ENCODE measurements at regions of chr19 and their contacts with region 1.

Region 1: GRCh38 chr19:13150187-13150930 is at the starts of genes IER2 and STX10:
- DNase-seq: peak; percentile 96 to 98
- ATAC-seq: peak; percentile 74 to 80 (median 75)
- H3K4me3 ChIP-seq: peak within 1 kb of the TSS; percentile 93
- H3K27ac ChIP-seq: peak within 1 kb of the TSS; percentile 96
- H3K4me1 ChIP-seq: peaks cover 22% of the 10 kb centered on the region
- H3K27me3 ChIP-seq: no peaks in the 10 kb centered on the region
- CTCF ChIP-seq: peak; percentile 54
- total RNA-seq, gene IER2: 16.8 to 31.2 (median 29.9) TPM
- total RNA-seq, gene STX10: 18.5 to 20.4 (median 19.3) TPM

Region 2: GRCh38 chr19:13117772-13118423 is 32.5 kb before region 1 on chr19 and contains the start of gene NACC1:
- intact Hi-C with region 1: loop called (anchors 1 to 2 kb)
- DNase-seq: peak; percentile 93 to 95
- ATAC-seq: peak; percentile 91 to 92 (median 92)
- H3K4me3 ChIP-seq: peak within 1 kb of the TSS; percentile 92
- H3K27ac ChIP-seq: peak within 1 kb of the TSS; percentile 79
- H3K4me1 ChIP-seq: peaks cover 37% of the 10 kb centered on the region
- H3K27me3 ChIP-seq: no peaks in the 10 kb centered on the region
- CTCF ChIP-seq: no peak
- total RNA-seq, gene NACC1: 32.1 to 48.9 (median 37.9) TPM

Region 3: GRCh38 chr19:13579388-13580060 is 429.2 kb after region 1 on chr19:
- intact Hi-C with region 1: no loop called
- DNase-seq: no peak
- ATAC-seq: no peak
- H3K4me3 ChIP-seq: no peak overlapping the region
- H3K27ac ChIP-seq: no peak overlapping the region
- H3K4me1 ChIP-seq: no peaks in the 10 kb centered on the region
- H3K27me3 ChIP-seq: no peaks in the 10 kb centered on the region
- CTCF ChIP-seq: no peak

Region 4: GRCh38 chr19:13842401-13843103 is 692.2 kb after region 1 on chr19:
- intact Hi-C with region 1: loop called in 1 of 2 experiments (anchors 5 kb)
- DNase-seq: peak; percentile 91 to 93
- ATAC-seq: peak; percentile 12 to 19 (median 12)
- H3K4me3 ChIP-seq: peak overlapping the region; percentile 99
- H3K27ac ChIP-seq: peak overlapping the region; percentile 100
- H3K4me1 ChIP-seq: peaks cover 33% of the 10 kb centered on the region
- H3K27me3 ChIP-seq: no peaks in the 10 kb centered on the region
- CTCF ChIP-seq: no peak

Region 5: DNA sequence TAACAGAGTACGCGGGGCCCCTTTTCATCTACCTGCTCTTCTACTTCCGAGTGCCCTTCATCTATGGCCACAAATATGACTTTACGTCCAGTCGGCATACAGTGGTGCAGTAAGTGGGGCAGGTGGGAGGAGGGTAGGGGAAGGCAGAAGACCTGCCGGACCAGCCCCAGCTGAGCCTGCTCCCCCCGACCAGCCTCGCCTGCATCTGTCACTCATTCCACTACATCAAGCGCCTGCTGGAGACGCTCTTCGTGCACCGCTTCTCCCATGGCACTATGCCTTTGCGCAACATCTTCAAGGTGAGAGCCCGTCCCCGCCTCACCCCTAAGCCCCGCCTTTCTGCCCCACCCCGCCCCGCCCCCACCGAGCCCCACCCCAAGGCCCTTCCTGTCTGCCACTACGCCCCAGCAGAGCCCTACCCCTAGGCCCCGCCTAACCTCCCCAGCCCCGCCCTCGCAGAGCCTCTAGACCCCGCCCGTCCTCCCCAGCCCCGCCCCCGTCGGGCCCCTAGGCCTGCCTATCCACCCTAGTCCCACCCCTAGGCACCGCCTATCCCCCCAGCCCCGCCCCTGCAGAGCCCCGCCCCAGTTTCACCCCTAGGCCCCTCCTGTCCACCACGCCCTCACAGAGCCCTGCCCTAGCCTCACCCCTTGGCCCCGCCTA is 1413.8 kb after region 1 on chr19:
- intact Hi-C with region 1: loop called in 1 of 2 experiments (anchors 5 kb)
- DNase-seq: peak; percentile 82 to 95
- ATAC-seq: peak; percentile 57 to 77 (median 70)
- H3K4me3 ChIP-seq: peak overlapping the region; percentile 74
- H3K27ac ChIP-seq: peak overlapping the region; percentile 96
- H3K4me1 ChIP-seq: peaks cover 31% of the 10 kb centered on the region
- H3K27me3 ChIP-seq: no peaks in the 10 kb centered on the region
- CTCF ChIP-seq: no peak

Measured in psoas muscle (tissue), 8 donors.